ENCODE measurements at regions of chr2 and their contacts with region 1.

Region 1: GRCh38 chr2:11784747-11785610 is 38.5 kb downstream of the LPIN1 start:
- DNase-seq: no peak
- H3K4me3 ChIP-seq: peak overlapping the region; percentile 55
- CTCF ChIP-seq: peak; percentile 91

Region 2: DNA sequence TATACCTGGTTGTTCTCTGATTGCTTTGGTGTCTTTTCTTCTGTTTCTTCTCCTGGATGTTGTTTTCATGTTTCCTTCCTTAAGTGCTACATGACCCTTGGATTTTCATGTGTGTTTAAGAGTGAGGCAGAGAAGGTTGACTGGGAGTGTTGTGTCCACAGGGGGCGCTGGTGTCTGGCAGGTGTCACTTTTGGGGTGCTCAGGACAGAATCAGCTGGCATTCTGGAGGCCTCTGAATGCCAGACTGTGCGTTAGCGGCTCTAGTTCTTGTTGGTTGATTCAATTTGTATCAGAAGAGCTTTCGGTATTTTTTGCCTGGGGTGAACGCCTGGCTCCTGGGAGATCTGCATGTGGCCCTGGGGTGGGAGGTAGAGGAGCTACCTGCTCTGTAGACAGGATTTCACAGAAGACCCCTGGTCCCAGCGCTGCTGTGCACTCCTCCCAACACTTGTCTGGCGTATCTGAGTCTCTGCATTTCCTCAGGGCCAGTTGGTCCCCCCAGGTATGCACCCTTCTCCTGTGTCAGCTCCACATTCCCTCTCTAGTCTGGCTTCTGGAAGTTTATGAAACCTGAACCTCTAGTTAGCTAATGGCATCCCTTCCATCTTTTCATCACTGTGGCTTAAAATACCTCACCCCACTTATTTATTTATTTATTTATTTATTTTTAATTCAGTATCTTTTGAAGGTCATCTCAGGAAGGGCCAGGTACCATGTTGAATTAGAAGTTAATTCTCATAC is 250.1 kb before region 1 on chr2:
- CTCF ChIA-PET with region 1: no interaction called
- POLR2A ChIA-PET with region 1: no interaction called
- DNase-seq: no peak
- H3K4me3 ChIP-seq: no peak overlapping the region
- CTCF ChIP-seq: no peak

Region 3: DNA sequence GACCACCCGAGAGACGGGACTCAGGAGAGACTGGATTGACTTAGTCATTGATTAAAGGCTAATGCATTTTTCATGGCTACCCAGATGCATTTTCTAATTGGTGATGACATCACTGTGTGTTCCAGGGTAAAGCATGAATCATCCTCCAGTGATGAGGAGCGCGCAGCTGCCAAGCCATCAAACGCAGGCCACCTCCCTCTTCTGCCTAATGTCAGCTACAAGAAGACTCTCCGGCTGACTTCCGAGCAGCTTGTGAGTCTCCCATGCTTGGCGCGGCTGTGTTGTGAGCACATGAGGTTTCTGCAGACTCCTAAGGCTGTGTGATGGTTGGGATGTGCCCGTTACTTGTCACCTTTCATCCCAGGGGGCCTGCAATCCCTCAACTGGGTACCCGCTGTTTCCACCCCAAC is 17.8 kb after region 1 on chr2:
- CTCF ChIA-PET with region 1: interaction called, 15 read pairs
- POLR2A ChIA-PET with region 1: no interaction called
- DNase-seq: no peak
- H3K4me3 ChIP-seq: no peak overlapping the region
- CTCF ChIP-seq: no peak